ENCODE measurements at regions of chr12 and their contacts with region 1.

Region 1: DNA sequence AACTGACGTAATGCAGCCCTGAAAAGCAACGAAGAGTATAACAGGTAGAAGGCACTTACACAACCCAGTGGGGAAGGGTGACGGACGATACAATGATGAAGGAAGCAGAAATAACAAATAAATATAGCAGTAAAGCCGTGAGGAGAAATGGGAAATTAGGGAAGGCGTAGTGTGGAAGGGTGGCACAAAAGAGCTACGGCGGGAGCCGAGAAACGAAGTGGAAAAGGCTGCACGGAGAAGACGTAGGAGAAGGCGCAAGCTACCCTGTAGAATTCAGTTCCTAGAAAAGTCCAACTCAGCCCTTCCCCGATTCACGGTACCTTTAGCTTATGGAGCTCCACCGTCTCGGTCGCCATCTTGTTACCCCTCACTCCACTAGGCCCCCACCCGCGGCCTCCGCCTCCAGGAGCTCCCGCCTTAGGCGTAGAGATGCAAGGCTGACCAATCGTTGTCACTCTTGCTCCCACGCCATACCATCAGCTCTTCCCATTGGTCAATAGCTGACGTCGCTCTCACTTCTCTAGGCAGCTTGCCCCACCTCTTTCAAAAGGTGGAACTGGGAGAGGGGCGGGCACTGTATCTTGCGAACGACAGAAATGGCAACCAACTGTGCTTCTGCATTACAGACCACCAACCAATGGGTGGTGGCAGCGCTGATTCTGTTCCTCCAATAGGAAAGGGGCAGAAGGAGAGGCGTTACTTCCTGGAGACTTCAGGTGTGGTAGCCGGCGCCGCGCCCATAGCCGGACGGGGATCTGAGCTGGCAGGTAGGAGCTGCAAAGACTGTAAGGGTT is at the starts of genes ORMDL2 and SARNP:
- DNase-seq: peak; percentile 95 to 96
- ATAC-seq: peak; percentile 98 to 99 (median 99)
- H3K4me3 ChIP-seq: peak within 1 kb of the TSS; percentile 84
- H3K27ac ChIP-seq: peak within 1 kb of the TSS; percentile 85
- H3K4me1 ChIP-seq: peaks cover 37% of the 10 kb centered on the region
- H3K27me3 ChIP-seq: no peaks in the 10 kb centered on the region
- CTCF ChIP-seq: no peak
- total RNA-seq, gene ORMDL2: 12.6 to 27.2 (median 15.0) TPM
- total RNA-seq, gene SARNP: 38.3 to 52.6 (median 43.0) TPM

Region 2: DNA sequence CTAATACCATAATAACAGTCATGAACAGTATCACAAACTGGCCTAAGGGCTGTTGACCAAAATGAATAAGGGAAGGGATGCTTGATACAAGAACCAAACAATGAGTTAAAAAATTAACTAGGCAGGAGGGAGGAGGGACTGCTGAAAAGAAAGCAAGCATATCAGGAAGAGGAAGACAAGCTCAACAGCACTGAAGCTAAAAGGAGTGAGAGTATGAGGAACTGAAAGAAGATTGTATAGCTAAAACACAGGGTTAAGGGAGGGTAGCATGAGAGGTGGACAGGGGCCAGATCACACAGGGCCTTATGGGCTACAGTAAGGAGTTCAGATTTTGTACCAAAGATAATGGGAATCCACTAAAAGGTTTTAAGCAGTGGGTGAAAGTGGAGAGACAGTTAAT is 143.9 kb before region 1 on chr12:
- intact Hi-C with region 1: loop called in 1 of 2 experiments (anchors 10 kb)
- DNase-seq: peak in 1 of 2 donors; percentile 29
- ATAC-seq: no peak
- H3K4me3 ChIP-seq: no peak overlapping the region
- H3K27ac ChIP-seq: no peak overlapping the region
- H3K4me1 ChIP-seq: no peaks in the 10 kb centered on the region
- H3K27me3 ChIP-seq: peaks cover 0 to 1% (median 0%) of the 10 kb centered on the region in 3 donors
- CTCF ChIP-seq: no peak